ENCODE measurements at regions of chr17 and their contacts with region 1.

Region 1: GRCh38 chr17:47698749-47699535 is 5.0 kb downstream of the TBKBP1 start:
- DNase-seq: peak; percentile 88
- ATAC-seq: peak; percentile 23
- H3K4me3 Mint-ChIP-seq: no peak overlapping the region
- H3K27ac Mint-ChIP-seq: no peak overlapping the region
- H3K4me1 Mint-ChIP-seq: peaks cover 16% of the 10 kb centered on the region
- H3K27me3 Mint-ChIP-seq: no peaks in the 10 kb centered on the region
- CTCF ChIP-seq: peak; percentile 100

Region 2: DNA sequence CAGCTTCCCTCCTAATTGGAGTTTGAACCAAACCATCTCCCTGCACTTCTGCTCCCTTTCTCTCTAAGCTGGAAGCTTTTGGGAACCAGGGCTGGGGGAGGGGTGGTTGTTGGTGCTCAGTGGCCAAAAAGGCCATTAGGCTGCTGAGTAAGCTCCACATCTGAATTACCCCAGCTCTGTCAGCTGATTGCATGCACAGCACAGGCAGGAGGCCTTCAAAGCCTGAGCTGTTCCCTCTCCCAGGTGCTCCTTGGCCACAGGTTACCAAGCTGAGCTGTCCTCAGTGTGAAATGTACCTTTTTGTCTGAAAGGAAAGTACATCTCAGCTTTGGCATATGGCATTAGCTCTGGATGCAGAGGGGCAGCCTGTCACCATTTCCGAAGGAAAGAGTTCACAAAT is 11.2 kb before region 1 on chr17:
- CTCF ChIA-PET with region 1: interaction called, 10 read pairs
- POLR2A ChIA-PET with region 1: no interaction called
- DNase-seq: peak; percentile 42
- ATAC-seq: peak; percentile 71
- H3K4me3 Mint-ChIP-seq: no peak overlapping the region
- H3K27ac Mint-ChIP-seq: peak overlapping the region; percentile 82
- H3K4me1 Mint-ChIP-seq: peaks cover 46% of the 10 kb centered on the region
- H3K27me3 Mint-ChIP-seq: no peaks in the 10 kb centered on the region
- CTCF ChIP-seq: no peak

Region 3: DNA sequence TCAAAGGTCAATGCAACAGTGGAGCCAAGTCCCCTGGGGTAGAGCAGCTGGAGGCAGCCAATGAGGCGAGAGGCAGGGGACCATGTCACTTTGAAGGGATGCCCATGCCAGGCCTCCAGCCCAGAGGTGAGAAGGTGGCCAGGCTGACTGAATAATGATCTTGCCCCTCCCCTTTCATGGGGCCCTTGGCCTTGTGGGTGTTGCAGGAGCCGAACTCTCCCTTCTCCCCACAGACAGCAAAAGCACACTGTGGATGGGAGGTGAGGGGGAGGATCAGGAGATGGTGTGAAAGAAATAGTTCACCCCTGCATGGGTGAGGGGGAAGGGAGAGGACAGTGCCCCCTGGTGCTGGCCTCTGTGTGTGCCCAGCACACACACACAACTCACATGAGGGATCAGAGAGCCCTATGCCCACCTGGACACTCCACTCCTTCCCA is 18.3 kb after region 1 on chr17:
- CTCF ChIA-PET with region 1: interaction called, 29 read pairs
- POLR2A ChIA-PET with region 1: no interaction called
- DNase-seq: no peak
- ATAC-seq: peak; percentile 5; the same call in 1 of the 2 replicates
- H3K4me3 Mint-ChIP-seq: no peak overlapping the region
- H3K27ac Mint-ChIP-seq: no peak overlapping the region
- H3K4me1 Mint-ChIP-seq: peaks cover 21% of the 10 kb centered on the region
- H3K27me3 Mint-ChIP-seq: peaks cover 73% of the 10 kb centered on the region
- CTCF ChIP-seq: no peak

Region 4: GRCh38 chr17:47742319-47743181 is 43.6 kb after region 1 on chr17:
- CTCF ChIA-PET with region 1: interaction called, 59 read pairs
- POLR2A ChIA-PET with region 1: no interaction called
- DNase-seq: peak; percentile 76
- ATAC-seq: peak; percentile 91
- H3K4me3 Mint-ChIP-seq: no peak overlapping the region
- H3K27ac Mint-ChIP-seq: no peak overlapping the region
- H3K4me1 Mint-ChIP-seq: no peaks in the 10 kb centered on the region
- H3K27me3 Mint-ChIP-seq: peaks cover 13% of the 10 kb centered on the region
- CTCF ChIP-seq: peak; percentile 86

Region 5: DNA sequence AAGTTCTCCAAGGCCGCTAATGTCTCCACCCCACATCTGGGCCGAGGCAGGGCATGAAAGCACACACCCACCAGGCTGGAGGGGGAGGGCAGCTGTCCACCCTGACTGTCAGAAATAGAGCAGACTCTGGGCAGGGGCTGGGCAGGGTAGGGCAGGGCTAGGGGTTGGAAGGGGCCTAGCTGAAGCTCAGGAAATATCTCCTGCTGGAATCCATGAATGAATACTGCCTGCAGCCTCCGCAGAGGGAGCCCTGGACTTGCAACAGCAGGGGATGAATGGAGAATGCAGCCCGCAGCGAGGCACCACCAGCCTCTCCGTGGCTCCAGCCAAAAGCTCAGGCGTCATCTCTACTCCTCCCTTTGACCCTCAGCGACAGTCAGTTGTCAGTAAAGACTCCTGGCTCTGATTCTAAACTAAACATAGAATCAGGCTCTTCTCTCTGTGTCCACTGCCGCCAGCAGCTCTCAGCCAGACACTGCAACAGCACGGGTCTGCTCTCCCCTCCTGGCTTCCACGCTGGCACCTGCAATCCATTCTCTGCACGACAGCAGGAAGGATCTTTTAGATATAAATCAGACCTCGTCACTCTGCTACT is 1772.2 kb after region 1 on chr17:
- CTCF ChIA-PET with region 1: interaction called, 10 read pairs
- POLR2A ChIA-PET with region 1: no interaction called
- DNase-seq: no peak
- ATAC-seq: peak; percentile 50
- H3K4me3 Mint-ChIP-seq: peak overlapping the region; percentile 66
- H3K27ac Mint-ChIP-seq: no peak overlapping the region
- H3K4me1 Mint-ChIP-seq: peaks cover 24% of the 10 kb centered on the region
- H3K27me3 Mint-ChIP-seq: peaks cover 60% of the 10 kb centered on the region
- CTCF ChIP-seq: no peak

Measured in WTC11 (cell line).